ENCODE measurements at regions of chr6 and their contacts with region 1.

Region 1: GRCh38 chr6:159033160-159034049 is 11.4 kb downstream of the TAGAP start:
- DNase-seq: no peak
- ATAC-seq: no peak
- H3K4me3 Mint-ChIP-seq: no peak overlapping the region
- H3K27ac Mint-ChIP-seq: peak overlapping the region; percentile 76
- H3K4me1 Mint-ChIP-seq: peaks cover 44% of the 10 kb centered on the region
- H3K27me3 Mint-ChIP-seq: no peaks in the 10 kb centered on the region
- CTCF ChIP-seq: no peak

Region 2: GRCh38 chr6:159017757-159018559 is 15.4 kb before region 1 on chr6:
- CTCF ChIA-PET with region 1: interaction called, 113 read pairs
- POLR2A ChIA-PET with region 1: interaction called, 128 read pairs
- intact Hi-C with region 1: no loop called
- DNase-seq: no peak
- ATAC-seq: peak; percentile 34
- H3K4me3 Mint-ChIP-seq: no peak overlapping the region
- H3K27ac Mint-ChIP-seq: peak overlapping the region; percentile 50
- H3K4me1 Mint-ChIP-seq: peaks cover 37% of the 10 kb centered on the region
- H3K27me3 Mint-ChIP-seq: no peaks in the 10 kb centered on the region
- CTCF ChIP-seq: no peak

Measured in activated B cell treated with CpG ODN at 0.5 μM for 24 hours (primary cell).